ENCODE measurements at regions of chr11 and their contacts with region 1.

Region 1: DNA sequence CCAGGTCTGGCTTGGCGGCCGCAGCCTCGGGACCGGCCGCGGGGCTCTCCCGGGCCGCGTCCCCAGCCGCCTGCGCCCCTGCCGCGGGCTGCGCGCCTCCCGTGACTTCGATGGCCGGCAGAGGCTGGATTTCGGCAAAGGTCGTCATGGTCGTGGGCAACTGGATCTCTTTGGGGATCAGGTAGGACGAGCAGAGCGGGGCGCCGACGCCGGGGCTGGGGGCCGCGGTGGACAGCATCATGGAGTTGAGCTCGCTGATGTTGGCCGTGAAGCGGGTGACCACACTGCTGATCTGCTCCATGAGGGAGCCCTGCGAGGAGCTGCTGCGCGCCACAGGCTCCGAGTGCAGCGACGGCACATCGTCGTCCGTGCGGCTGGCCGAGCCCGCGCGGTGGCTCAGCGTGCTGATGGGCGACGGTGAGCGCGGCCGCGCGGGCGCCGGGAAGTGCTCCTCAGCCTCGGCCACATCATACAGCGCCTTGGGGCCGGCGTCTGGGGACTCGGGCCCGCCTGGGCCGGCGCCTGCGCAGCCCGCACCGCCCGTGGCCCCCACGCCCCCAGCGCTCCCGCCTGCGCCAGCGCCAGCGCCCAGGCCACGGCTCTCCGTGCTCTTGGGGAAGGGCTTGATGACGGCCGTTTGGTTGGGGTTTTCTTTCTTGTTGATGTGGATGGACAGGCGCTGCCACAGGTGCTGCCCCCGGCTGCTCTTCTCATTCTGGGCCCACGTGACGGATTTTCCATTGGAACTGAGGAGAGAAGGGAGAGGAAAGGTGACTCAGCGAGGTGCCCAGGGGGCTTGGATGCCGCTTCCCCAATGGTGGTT is 171.4 kb upstream of the CTSC start:
- DNase-seq: peak; percentile 56
- H3K4me3 Mint-ChIP-seq: peak overlapping the region; percentile 83
- H3K27ac Mint-ChIP-seq: peak overlapping the region; percentile 98
- H3K4me1 Mint-ChIP-seq: peaks cover 19% of the 10 kb centered on the region
- H3K27me3 Mint-ChIP-seq: no peaks in the 10 kb centered on the region
- CTCF ChIP-seq: no peak

Region 2: GRCh38 chr11:88315981-88316441 is 193.0 kb before region 1 on chr11:
- CTCF ChIA-PET with region 1: no interaction called
- intact Hi-C with region 1: loop called (anchors 5 kb)
- DNase-seq: no peak
- H3K4me3 Mint-ChIP-seq: peak overlapping the region; percentile 46
- H3K27ac Mint-ChIP-seq: peak overlapping the region; percentile 68
- H3K4me1 Mint-ChIP-seq: peaks cover 33% of the 10 kb centered on the region
- H3K27me3 Mint-ChIP-seq: no peaks in the 10 kb centered on the region
- CTCF ChIP-seq: no peak

Region 3: DNA sequence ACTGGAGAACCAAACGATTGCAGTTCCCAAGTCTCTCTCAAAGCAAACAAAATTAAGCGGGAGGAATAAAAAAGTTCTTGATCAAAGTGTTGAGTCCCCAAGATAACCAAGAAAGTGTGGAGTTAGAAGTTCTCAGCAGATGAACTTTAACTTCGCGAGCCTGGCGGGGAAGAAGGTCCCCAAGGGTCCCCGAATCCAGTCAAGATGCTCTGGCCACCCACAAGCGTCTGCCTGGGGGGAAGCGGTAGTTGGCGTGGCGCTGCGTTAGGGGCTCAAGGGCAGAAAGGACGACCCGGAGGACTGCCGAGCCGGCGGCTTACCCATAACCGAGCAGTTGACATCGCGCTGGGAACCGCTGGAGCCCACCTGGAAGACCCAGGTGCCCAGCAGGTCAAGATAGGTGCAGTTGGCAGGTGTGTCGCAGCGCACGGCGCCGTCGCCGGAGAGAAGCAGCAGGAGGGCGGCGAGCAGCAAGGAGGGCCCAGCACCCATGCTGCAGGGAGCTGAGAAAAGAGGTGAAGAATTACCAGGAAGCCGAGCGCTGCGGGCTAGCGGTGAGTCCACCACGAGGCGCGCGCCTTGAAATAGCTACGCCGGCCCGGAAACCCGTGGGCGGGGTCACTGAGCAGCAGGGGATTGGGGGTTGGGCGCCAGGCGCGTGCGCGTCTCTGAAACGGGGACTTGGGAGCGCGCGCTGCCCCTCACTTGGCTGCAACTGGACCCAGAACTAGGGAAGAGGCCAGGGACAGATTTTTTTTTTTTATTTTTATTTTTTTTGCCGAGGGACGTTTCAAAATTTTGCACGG is 171.6 kb before region 1 on chr11 and contains the start of gene CTSC:
- CTCF ChIA-PET with region 1: no interaction called
- intact Hi-C with region 1: loop called (anchors 2 kb)
- DNase-seq: peak; percentile 94
- H3K4me3 Mint-ChIP-seq: peak within 1 kb of the TSS; percentile 97
- H3K27ac Mint-ChIP-seq: peak within 1 kb of the TSS; percentile 74
- H3K4me1 Mint-ChIP-seq: peaks cover 16% of the 10 kb centered on the region
- H3K27me3 Mint-ChIP-seq: no peaks in the 10 kb centered on the region
- CTCF ChIP-seq: no peak
- total RNA-seq, gene CTSC: 413 and 478 TPM in 2 replicates

Region 4: GRCh38 chr11:88414385-88414861 is 94.5 kb before region 1 on chr11:
- CTCF ChIA-PET with region 1: no interaction called
- intact Hi-C with region 1: loop called (anchors 10 kb)
- DNase-seq: peak; percentile 18
- H3K4me3 Mint-ChIP-seq: no peak overlapping the region
- H3K27ac Mint-ChIP-seq: peak overlapping the region; percentile 29
- H3K4me1 Mint-ChIP-seq: peaks cover 42% of the 10 kb centered on the region
- H3K27me3 Mint-ChIP-seq: no peaks in the 10 kb centered on the region
- CTCF ChIP-seq: no peak

Region 5: DNA sequence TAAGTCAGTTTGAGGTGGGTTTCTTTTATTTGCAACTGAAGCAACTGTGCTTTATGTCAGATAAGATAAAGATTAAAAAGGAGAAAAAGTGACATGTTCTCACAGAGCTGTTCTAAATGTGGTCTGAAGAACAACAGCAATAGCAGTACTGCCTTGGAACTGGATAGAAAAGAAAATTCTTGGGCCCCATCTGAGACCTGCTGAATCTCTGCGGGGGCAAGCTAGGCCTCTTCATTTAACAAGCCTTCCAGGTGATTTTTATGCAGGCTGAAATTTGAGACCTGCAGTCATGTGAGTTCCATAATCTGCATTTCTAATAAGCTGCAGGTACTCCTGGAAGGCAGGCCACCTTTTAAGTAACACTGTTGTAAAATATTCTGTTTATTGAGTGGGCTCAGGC is 80.0 kb before region 1 on chr11:
- CTCF ChIA-PET with region 1: no interaction called
- intact Hi-C with region 1: no loop called
- DNase-seq: no peak
- H3K4me3 Mint-ChIP-seq: no peak overlapping the region
- H3K27ac Mint-ChIP-seq: no peak overlapping the region
- H3K4me1 Mint-ChIP-seq: no peaks in the 10 kb centered on the region
- H3K27me3 Mint-ChIP-seq: no peaks in the 10 kb centered on the region
- CTCF ChIP-seq: no peak

Region 6: GRCh38 chr11:89405629-89406028 is 896.7 kb after region 1 on chr11:
- CTCF ChIA-PET with region 1: no interaction called
- intact Hi-C with region 1: no loop called
- DNase-seq: no peak
- H3K4me3 Mint-ChIP-seq: no peak overlapping the region
- H3K27ac Mint-ChIP-seq: no peak overlapping the region
- H3K4me1 Mint-ChIP-seq: no peaks in the 10 kb centered on the region
- H3K27me3 Mint-ChIP-seq: no peaks in the 10 kb centered on the region
- CTCF ChIP-seq: no peak